Aorta (tissue), 5 donors: ENCODE measurements at regions of chr16 and their contacts with region 1.

Region 1: GRCh38 chr16:82626791-82627261 is at the start of gene CDH13:
- DNase-seq: peak; percentile 66 to 83
- ATAC-seq: peak; percentile 39
- H3K4me3 ChIP-seq: peak within 1 kb of the TSS; percentile 86
- H3K27ac ChIP-seq: peak within 1 kb of the TSS; percentile 15 to 45
- H3K4me1 ChIP-seq: peaks cover 4 to 5% of the 10 kb centered on the region in 2 donors
- H3K27me3 ChIP-seq: no peaks in the 10 kb centered on the region
- total RNA-seq, gene CDH13: 159 to 265 TPM

Region 2: DNA sequence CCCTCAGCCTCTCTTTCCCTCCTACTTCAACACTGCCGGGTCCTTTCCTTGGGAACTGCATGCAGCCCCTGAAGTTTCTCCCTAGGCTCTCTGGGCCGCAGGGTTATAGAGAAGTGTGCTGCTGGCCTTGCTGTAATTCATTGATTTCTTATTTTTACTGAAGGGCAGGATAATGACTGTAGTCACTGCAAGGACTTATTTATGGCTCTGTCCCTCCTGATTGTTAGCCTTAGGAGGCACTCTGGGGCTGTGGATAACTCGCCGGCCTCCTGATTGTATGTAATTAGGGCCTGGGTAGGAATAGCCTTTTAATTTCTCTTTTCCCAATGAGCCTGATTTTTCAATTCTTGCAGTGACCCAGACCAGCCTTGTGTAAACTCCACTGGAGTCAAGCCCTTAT is 138.4 kb before region 1 on chr16:
- intact Hi-C with region 1: no loop called
- DNase-seq: no peak
- ATAC-seq: no peak
- H3K4me3 ChIP-seq: no peak overlapping the region
- H3K27ac ChIP-seq: no peak overlapping the region
- H3K4me1 ChIP-seq: no peaks in the 10 kb centered on the region
- H3K27me3 ChIP-seq: no peaks in the 10 kb centered on the region

Region 3: DNA sequence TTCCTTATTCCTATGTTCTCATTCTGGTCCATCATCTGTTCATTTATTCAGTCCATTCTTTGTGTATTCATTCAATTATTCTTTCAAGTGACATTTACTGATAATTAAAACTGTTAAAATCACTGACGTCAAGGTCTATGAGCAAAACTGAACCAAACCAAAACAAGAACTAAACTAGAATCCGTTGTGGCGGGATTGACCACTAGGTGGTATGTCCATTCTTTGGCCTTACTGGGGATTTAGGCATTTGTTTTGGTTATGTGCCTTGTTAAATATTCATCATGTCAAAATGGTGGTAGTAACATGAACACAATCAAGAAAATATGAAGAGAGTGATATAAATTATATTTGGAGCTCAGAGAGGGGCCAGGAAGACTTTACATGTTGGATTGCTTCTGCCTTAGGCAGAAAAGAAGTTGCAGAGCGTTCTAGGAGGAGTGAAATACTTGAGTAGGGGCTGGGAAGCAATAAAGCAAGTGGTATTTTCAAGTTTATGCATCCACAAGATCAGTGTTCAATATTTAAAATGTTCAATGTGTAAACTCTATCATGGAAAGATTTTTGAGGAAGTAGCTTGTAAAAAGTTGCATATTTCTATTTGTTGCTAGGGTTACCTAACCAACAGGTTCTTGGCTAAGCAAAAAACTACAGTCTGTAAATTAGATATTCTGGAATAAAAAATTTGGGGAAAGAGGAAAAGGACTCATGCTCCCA is 128.9 kb after region 1 on chr16:
- intact Hi-C with region 1: loop called in 1 of 2 experiments (anchors 5 kb)
- DNase-seq: no peak
- ATAC-seq: no peak
- H3K4me3 ChIP-seq: no peak overlapping the region
- H3K27ac ChIP-seq: peak overlapping the region in 1 of 2 donors; percentile 24
- H3K4me1 ChIP-seq: peaks cover 7 to 11% of the 10 kb centered on the region in 2 donors
- H3K27me3 ChIP-seq: no peaks in the 10 kb centered on the region

Region 4: GRCh38 chr16:83002351-83003334 is 375.8 kb after region 1 on chr16:
- intact Hi-C with region 1: loop called in 1 of 2 experiments (anchors 5 kb)
- DNase-seq: no peak
- ATAC-seq: no peak
- H3K4me3 ChIP-seq: no peak overlapping the region
- H3K27ac ChIP-seq: peak overlapping the region; percentile 1 to 29
- H3K4me1 ChIP-seq: peaks cover 7 to 14% of the 10 kb centered on the region in 2 donors
- H3K27me3 ChIP-seq: no peaks in the 10 kb centered on the region